ENCODE measurements at regions of chr6 and their contacts with region 1.

Region 1: GRCh38 chr6:89297695-89298351 is 17.3 kb downstream of the GABRR2 start:
- DNase-seq: peak; percentile 91
- H3K4me3 Mint-ChIP-seq: peak overlapping the region; percentile 59
- H3K27ac Mint-ChIP-seq: peak overlapping the region; percentile 78
- H3K4me1 Mint-ChIP-seq: peaks cover 26% of the 10 kb centered on the region
- H3K27me3 Mint-ChIP-seq: no peaks in the 10 kb centered on the region

Region 2: GRCh38 chr6:89145787-89146646 is 151.8 kb before region 1 on chr6 and contains the start of gene PM20D2:
- CTCF ChIA-PET with region 1: interaction called, 4 read pairs
- POLR2A ChIA-PET with region 1: interaction called, 5 read pairs
- intact Hi-C with region 1: loop called (anchors 1 kb)
- DNase-seq: peak; percentile 71
- H3K4me3 Mint-ChIP-seq: peak within 1 kb of the TSS; percentile 85
- H3K27ac Mint-ChIP-seq: peak within 1 kb of the TSS; percentile 95
- H3K4me1 Mint-ChIP-seq: peaks cover 37% of the 10 kb centered on the region
- H3K27me3 Mint-ChIP-seq: no peaks in the 10 kb centered on the region
- total RNA-seq, gene PM20D2: 8.4 to 8.9 TPM

Region 3: GRCh38 chr6:89281779-89282246 is 16.0 kb before region 1 on chr6:
- CTCF ChIA-PET with region 1: interaction called, 6 read pairs
- POLR2A ChIA-PET with region 1: no interaction called
- intact Hi-C with region 1: loop called (anchors 1 kb)
- DNase-seq: peak; percentile 77
- H3K4me3 Mint-ChIP-seq: no peak overlapping the region
- H3K27ac Mint-ChIP-seq: no peak overlapping the region
- H3K4me1 Mint-ChIP-seq: no peaks in the 10 kb centered on the region
- H3K27me3 Mint-ChIP-seq: no peaks in the 10 kb centered on the region

Region 4: GRCh38 chr6:89352278-89353117 is 54.7 kb after region 1 on chr6 and contains the start of gene UBE2J1:
- CTCF ChIA-PET with region 1: interaction called, 15 read pairs
- POLR2A ChIA-PET with region 1: interaction called, 29 read pairs
- intact Hi-C with region 1: loop called (anchors 1 kb)
- DNase-seq: peak; percentile 85
- H3K4me3 Mint-ChIP-seq: peak within 1 kb of the TSS; percentile 91
- H3K27ac Mint-ChIP-seq: peak within 1 kb of the TSS; percentile 84
- H3K4me1 Mint-ChIP-seq: peaks cover 75% of the 10 kb centered on the region
- H3K27me3 Mint-ChIP-seq: no peaks in the 10 kb centered on the region
- total RNA-seq, gene UBE2J1: 23.8 to 24.9 TPM

Region 5: DNA sequence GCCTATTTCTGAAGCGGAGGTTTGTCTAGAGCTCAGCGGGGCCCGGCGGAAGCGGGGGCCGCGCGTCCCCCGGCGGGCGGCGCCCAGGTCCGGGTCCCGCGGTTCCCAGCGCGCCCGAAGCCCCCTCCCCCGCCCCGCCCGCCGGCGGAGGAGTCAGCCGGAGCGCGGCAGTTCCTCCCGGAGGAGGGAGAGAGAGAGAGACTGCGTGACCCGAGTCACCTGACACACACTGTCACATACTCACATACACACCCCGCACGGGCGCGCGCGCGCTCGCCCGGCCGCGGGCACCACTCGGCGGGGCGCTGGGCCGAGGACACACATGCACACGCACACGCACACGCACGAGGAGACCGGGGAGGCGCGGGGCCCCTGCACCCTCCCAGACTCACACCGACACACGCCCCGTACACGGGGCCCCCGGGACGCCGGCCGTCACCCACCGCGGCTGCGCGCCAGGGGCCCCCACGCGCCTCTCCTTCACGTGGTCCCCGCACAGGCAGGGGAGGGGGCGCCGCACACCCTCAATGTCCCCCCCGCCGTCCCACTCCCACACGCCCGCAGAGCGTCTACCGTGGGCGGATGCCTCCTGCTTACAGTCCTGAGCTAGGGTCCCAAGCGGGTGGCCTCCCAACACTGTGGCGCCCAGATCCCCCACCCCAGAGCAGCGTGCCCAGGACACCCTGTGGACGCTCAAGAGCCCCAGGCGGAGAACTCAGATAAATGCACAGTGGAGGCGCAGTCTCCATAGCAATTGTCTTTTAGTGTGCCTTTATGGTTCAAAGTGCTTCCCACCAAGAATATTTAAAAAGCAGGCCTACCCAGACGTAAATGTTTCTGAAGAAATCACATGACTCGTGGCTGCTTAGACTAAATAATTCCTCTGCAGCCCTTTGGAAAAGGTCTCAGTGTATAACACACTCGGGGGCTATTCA is 114.5 kb after region 1 on chr6 and contains the start of gene RRAGD:
- CTCF ChIA-PET with region 1: no interaction called
- POLR2A ChIA-PET with region 1: no interaction called
- intact Hi-C with region 1: loop called (anchors 2 kb)
- DNase-seq: peak; percentile 72
- H3K4me3 Mint-ChIP-seq: peak within 1 kb of the TSS; percentile 83
- H3K27ac Mint-ChIP-seq: peak within 1 kb of the TSS; percentile 38
- H3K4me1 Mint-ChIP-seq: peaks cover 18% of the 10 kb centered on the region
- H3K27me3 Mint-ChIP-seq: peaks cover 2% of the 10 kb centered on the region
- total RNA-seq, gene RRAGD: 15.8 to 16.4 TPM